Psoas muscle (tissue), 8 donors: ENCODE measurements at regions of chr7 and their contacts with region 1.

Region 1: GRCh38 chr7:126394406-126394805 is 858.3 kb downstream of the GRM8 start:
- DNase-seq: no peak
- ATAC-seq: no peak
- H3K4me3 ChIP-seq: no peak overlapping the region
- H3K27ac ChIP-seq: no peak overlapping the region
- H3K4me1 ChIP-seq: no peaks in the 10 kb centered on the region
- H3K27me3 ChIP-seq: no peaks in the 10 kb centered on the region
- CTCF ChIP-seq: no peak

Region 2: GRCh38 chr7:126302639-126303038 is 91.8 kb before region 1 on chr7:
- intact Hi-C with region 1: no loop called
- DNase-seq: no peak
- ATAC-seq: no peak
- H3K4me3 ChIP-seq: no peak overlapping the region
- H3K27ac ChIP-seq: no peak overlapping the region
- H3K4me1 ChIP-seq: no peaks in the 10 kb centered on the region
- H3K27me3 ChIP-seq: no peaks in the 10 kb centered on the region
- CTCF ChIP-seq: no peak

Region 3: GRCh38 chr7:126411032-126411820 is 16.8 kb after region 1 on chr7:
- intact Hi-C with region 1: no loop called
- DNase-seq: no peak
- ATAC-seq: no peak
- H3K4me3 ChIP-seq: no peak overlapping the region
- H3K27ac ChIP-seq: no peak overlapping the region
- H3K4me1 ChIP-seq: no peaks in the 10 kb centered on the region
- H3K27me3 ChIP-seq: no peaks in the 10 kb centered on the region
- CTCF ChIP-seq: no peak

Region 4: DNA sequence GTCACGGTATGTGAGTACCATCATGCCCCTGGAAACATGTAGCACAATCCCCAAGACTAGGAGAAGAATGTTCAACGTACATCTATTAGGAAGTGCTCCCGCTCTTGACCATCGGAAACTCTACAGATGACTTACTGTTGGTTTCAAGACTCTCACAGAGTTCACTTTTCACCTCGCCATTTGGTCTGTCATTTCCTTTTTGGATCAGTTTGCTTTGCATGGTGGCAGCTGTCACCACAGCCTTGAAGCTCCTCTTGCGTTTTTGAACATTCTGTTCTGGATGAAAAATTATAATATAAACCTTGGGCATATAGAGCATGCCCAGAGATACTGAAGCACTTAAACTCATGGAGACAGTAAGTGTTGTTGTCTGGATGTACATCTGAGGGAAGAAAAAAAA is 51.6 kb after region 1 on chr7:
- intact Hi-C with region 1: loop called in 1 of 2 experiments (anchors 2 kb)
- DNase-seq: no peak
- ATAC-seq: no peak
- H3K4me3 ChIP-seq: no peak overlapping the region
- H3K27ac ChIP-seq: no peak overlapping the region
- H3K4me1 ChIP-seq: no peaks in the 10 kb centered on the region
- H3K27me3 ChIP-seq: no peaks in the 10 kb centered on the region
- CTCF ChIP-seq: no peak